ENCODE measurements at regions of chr5 and their contacts with region 1.

Region 1: DNA sequence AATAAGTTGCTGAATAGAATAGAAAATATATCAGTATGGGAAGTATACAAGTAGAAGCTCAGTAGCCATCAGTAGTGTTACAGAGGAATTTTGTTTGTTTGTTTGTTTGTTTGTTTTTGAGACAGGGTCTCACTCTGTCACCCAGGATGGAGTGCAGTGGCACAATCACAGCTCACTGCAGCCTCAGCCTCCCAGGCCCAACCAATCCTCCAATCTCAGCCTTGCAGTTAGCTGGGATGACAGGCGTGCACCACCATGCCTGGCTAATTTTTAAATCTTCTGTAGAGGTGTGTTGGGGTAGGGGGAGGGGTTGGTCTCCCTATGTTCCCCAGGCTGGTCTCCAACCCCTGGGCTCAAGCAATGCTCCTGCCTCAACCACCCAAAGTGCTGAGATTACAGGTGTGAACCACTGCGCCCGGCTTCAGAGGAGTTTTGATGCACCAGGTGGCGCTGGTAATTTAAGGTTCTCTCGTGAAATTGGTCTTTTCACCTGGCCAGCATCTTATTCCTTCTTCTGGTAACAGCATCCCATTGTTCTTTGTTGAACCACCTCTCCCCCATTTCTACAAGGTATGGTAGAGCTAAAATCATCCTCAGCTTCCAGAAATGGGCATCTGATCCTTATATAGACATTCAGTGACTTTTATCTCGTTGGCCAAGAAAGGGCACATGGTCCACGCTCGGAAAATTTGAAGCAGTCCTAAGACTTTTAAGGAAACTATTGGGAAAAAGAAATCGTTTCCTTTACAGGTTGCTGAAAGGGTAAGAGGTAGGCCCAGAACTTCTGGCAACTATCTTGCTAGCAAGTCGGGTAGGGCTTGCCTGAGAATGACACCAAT is 157.1 kb downstream of the ARRDC3 start:
- DNase-seq: peak; percentile 32 to 79 (median 56)
- ATAC-seq: peak; percentile 71
- H3K4me3 ChIP-seq: no peak overlapping the region
- H3K4me3 Mint-ChIP-seq: no peak overlapping the region
- H3K27ac ChIP-seq: no peak overlapping the region
- H3K27ac Mint-ChIP-seq: no peak overlapping the region
- H3K4me1 ChIP-seq: no peaks in the 10 kb centered on the region
- H3K4me1 Mint-ChIP-seq: no peaks in the 10 kb centered on the region
- H3K27me3 ChIP-seq: no peaks in the 10 kb centered on the region
- H3K27me3 Mint-ChIP-seq: no peaks in the 10 kb centered on the region
- CTCF ChIP-seq: peak; percentile 76

Region 2: DNA sequence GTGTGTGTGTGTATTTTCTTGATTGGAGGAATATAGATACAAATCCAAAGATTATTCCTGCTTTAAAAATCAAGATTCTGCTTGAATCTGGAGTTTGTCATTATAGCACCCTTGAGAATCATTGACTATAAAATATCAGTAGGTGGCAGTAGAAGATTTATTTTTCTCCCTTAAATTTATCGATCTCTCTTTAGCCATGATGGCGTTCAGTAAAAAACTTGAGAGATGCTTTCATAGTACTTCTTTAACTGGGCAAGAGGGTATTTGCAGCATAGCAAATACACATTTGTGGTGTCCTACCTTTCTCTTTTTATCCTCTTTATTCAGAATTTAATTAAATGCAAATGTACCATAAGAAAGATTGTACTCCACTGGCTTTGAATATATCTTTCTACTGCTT is 359.7 kb before region 1 on chr5:
- CTCF ChIA-PET with region 1: no interaction called
- POLR2A ChIA-PET with region 1: no interaction called
- intact Hi-C with region 1: loop called (anchors 5 to 10 kb)
- DNase-seq: peak in 3 of 14 experiments; percentile 35 to 46 (median 44)
- ATAC-seq: no peak
- H3K4me3 ChIP-seq: no peak overlapping the region
- H3K4me3 Mint-ChIP-seq: no peak overlapping the region
- H3K27ac ChIP-seq: no peak overlapping the region
- H3K27ac Mint-ChIP-seq: no peak overlapping the region
- H3K4me1 ChIP-seq: no peaks in the 10 kb centered on the region
- H3K4me1 Mint-ChIP-seq: peaks cover 7% of the 10 kb centered on the region
- H3K27me3 ChIP-seq: no peaks in the 10 kb centered on the region
- H3K27me3 Mint-ChIP-seq: peaks cover 12% of the 10 kb centered on the region
- CTCF ChIP-seq: peak; percentile 43

Region 3: GRCh38 chr5:90932052-90932699 is 293.9 kb before region 1 on chr5:
- CTCF ChIA-PET with region 1: no interaction called
- POLR2A ChIA-PET with region 1: no interaction called
- intact Hi-C with region 1: loop called in 1 of 2 experiments (anchors 5 kb)
- DNase-seq: peak in 7 of 14 experiments; percentile 1 to 62 (median 44)
- ATAC-seq: no peak
- H3K4me3 ChIP-seq: no peak overlapping the region
- H3K4me3 Mint-ChIP-seq: no peak overlapping the region
- H3K27ac ChIP-seq: no peak overlapping the region
- H3K27ac Mint-ChIP-seq: no peak overlapping the region
- H3K4me1 ChIP-seq: no peaks in the 10 kb centered on the region
- H3K4me1 Mint-ChIP-seq: no peaks in the 10 kb centered on the region
- H3K27me3 ChIP-seq: peaks cover 0 to 5% of the 10 kb centered on the region in 2 experiments
- H3K27me3 Mint-ChIP-seq: no peaks in the 10 kb centered on the region
- CTCF ChIP-seq: peak; percentile 62

Region 4: GRCh38 chr5:91101600-91102379 is 124.3 kb before region 1 on chr5:
- CTCF ChIA-PET with region 1: no interaction called
- POLR2A ChIA-PET with region 1: no interaction called
- intact Hi-C with region 1: loop called in 1 of 2 experiments (anchors 5 kb)
- DNase-seq: peak; percentile 3 to 76 (median 25)
- ATAC-seq: peak; percentile 84
- H3K4me3 ChIP-seq: no peak overlapping the region
- H3K4me3 Mint-ChIP-seq: no peak overlapping the region
- H3K27ac ChIP-seq: no peak overlapping the region
- H3K27ac Mint-ChIP-seq: no peak overlapping the region
- H3K4me1 ChIP-seq: no peaks in the 10 kb centered on the region
- H3K4me1 Mint-ChIP-seq: no peaks in the 10 kb centered on the region
- H3K27me3 ChIP-seq: no peaks in the 10 kb centered on the region
- H3K27me3 Mint-ChIP-seq: no peaks in the 10 kb centered on the region
- CTCF ChIP-seq: peak; percentile 41

Region 5: GRCh38 chr5:91311697-91312501 is 85.8 kb after region 1 on chr5:
- CTCF ChIA-PET with region 1: no interaction called
- POLR2A ChIA-PET with region 1: interaction called, 3 read pairs
- intact Hi-C with region 1: loop called in 1 of 2 experiments (anchors 5 kb)
- DNase-seq: peak; percentile 25 to 91 (median 61)
- ATAC-seq: peak; percentile 73
- H3K4me3 ChIP-seq: peak overlapping the region; percentile 1
- H3K4me3 Mint-ChIP-seq: peak overlapping the region; percentile 76
- H3K27ac ChIP-seq: peak overlapping the region; percentile 55 to 59
- H3K27ac Mint-ChIP-seq: peak overlapping the region; percentile 85
- H3K4me1 ChIP-seq: peaks cover 48% of the 10 kb centered on the region
- H3K4me1 Mint-ChIP-seq: peaks cover 47% of the 10 kb centered on the region
- H3K27me3 ChIP-seq: no peaks in the 10 kb centered on the region
- H3K27me3 Mint-ChIP-seq: no peaks in the 10 kb centered on the region
- CTCF ChIP-seq: no peak

Measured in CD4-positive, alpha-beta T cell (primary cell).